Dorsolateral prefrontal cortex (tissue), 120 donors: ENCODE measurements at regions of chr14 and their contacts with region 1.

Region 1: DNA sequence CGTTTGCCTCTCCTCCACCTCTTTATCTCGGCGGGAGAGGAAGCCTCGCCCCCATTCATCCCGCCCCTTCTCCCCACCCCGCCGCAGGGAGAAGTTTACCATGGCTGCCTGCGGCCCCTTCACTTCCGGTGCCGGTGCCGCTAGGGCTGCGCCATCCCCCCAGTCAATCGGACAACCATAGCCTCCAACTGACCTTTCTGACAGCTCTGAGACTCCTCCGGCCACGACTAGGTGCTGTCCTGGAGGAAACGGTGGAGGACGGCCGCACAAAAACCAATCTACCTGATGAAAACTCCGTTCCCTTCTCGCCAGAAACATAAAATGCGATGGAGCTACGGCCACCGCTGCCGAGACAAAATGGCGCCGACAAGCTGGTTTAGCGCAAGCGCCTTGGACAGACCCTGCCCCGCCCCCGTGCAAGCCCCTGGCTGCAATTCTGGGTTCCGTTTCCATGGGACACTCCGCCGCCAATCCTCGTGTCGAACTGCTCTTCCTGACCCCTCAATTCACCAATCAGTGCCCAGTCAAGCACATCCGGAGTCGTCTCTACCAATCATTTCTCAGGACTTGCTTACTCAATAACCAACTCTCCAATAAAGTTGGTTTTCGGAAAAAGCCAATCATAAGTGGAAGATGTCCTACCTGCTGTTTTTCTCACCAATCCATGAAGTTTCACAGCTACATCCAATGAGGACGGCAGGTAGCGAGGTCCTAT is 436 bp upstream of the ARID4A start:
- DNase-seq: peak; percentile 97 to 99 (median 98)
- H3K4me3 ChIP-seq: peak overlapping the region; percentile 63 to 100 (median 95)
- H3K27ac ChIP-seq: peak overlapping the region; percentile 91 to 100 (median 99)
- H3K27me3 ChIP-seq: no peaks in the 10 kb centered on the region
- CTCF ChIP-seq: peak in 47 of 56 donors; percentile 12 to 61 (median 36)

Region 2: DNA sequence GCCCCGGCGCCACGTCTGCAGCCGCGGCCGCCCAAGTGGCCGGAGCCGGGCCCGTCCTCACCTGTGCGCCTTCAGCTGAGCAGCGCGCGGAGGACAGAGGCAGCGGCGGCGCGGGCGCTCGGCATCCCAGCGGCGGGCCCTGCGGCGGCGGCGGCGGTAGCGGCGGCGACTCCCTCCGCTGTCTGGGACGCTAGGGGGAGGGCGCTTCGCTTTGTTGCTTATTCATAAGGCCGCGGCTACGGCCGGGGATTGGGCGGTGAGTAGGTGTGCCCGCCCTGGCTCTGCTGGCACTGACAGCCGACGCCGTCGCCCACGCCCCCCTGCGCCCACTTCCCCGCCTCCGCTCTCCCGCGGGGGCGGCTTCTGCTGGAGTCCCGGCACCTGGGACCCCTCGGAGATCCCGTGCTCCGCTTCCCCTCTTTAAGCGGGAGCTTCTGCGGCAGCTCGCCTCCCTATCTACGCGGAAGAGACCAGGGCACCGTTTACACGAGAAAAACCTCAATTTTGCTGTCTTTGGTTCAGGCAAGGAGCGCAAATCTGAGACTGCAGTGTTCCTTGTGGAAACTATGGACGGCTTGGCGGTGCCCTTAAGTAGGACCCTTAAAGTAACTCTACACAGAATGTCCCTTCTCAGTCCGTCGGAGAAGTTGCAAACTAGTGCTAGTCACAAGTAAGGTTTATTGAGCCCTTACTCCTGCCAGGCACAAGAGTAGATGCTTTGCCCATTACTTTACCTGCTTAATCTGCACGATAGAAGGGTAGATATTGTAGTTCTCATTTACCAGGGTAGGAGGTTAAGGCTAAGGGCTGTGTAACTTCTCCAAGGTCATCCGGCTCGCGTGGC is 145.7 kb before region 1 on chr14 and contains the start of gene ARMH4:
- intact Hi-C with region 1: loop called in 1 of 2 experiments (anchors 5 kb)
- DNase-seq: peak; percentile 61 to 89 (median 86)
- H3K4me3 ChIP-seq: peak within 1 kb of the TSS; percentile 69 to 97 (median 85)
- H3K27ac ChIP-seq: peak within 1 kb of the TSS in 56 of 59 donors; percentile 5 to 89 (median 74)
- H3K27me3 ChIP-seq: no peaks in the 10 kb centered on the region
- CTCF ChIP-seq: peak in 43 of 56 donors; percentile 9 to 63 (median 36)
- total RNA-seq, gene ARMH4: 19.2 to 48.5 (median 33.8) TPM

Region 3: GRCh38 chr14:58239244-58240195 is 58.4 kb before region 1 on chr14:
- intact Hi-C with region 1: loop called (anchors 1 kb)
- DNase-seq: peak; percentile 64 to 85 (median 70)
- H3K4me3 ChIP-seq: peak overlapping the region; percentile 45 to 87 (median 73)
- H3K27ac ChIP-seq: peak overlapping the region; percentile 20 to 89 (median 79)
- H3K27me3 ChIP-seq: no peaks in the 10 kb centered on the region
- CTCF ChIP-seq: peak in 3 of 56 donors; percentile 6 to 19 (median 8)

Region 4: DNA sequence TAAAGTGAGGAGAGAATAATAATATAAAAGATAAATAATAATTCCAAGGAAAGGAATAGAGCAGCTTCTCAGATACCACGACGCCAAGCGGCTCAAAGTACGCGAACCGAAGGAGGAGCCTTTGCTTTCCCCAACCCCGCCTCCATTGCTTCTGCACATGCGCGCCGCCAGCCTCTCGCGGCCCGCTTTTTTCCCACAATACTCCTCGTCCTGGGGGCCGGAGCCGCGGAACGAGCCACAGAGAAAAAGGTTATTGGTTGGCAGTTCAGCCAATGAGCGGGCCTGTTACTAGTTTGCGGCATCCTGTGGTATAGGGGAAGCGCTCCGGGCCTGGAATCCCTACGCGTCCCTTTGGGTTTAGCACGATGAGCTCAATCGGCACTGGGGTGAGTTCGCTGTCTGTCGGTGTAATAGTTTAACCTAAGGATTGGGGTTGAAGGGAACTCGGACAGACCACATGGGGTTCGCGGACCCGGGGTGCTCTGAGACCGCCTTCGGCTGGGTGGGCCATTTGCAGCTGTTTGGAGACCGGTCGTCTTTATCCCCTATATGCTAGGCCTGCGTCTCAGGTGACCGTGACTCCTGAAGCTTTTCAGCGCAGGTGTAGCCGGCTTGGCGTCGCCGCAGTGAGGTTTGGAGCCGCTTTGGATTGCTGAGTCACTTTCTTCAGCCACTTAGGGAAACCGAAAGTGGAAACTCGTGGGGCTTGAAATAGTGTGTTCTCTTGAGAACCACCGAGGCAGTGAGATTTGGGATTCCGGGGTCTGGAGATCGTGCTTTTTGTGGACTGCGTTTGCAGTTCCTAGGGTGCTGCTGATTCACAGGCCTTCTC is 53.1 kb before region 1 on chr14 and contains the start of gene PSMA3:
- intact Hi-C with region 1: loop called (anchors 1 kb)
- DNase-seq: peak; percentile 92 to 98 (median 96)
- H3K4me3 ChIP-seq: peak within 1 kb of the TSS; percentile 63 to 99 (median 90)
- H3K27ac ChIP-seq: peak within 1 kb of the TSS; percentile 74 to 98 (median 93)
- H3K27me3 ChIP-seq: no peaks in the 10 kb centered on the region
- CTCF ChIP-seq: peak in 44 of 56 donors; percentile 5 to 64 (median 35)
- total RNA-seq, gene PSMA3: 45.6 to 146 (median 80.0) TPM

Region 5: DNA sequence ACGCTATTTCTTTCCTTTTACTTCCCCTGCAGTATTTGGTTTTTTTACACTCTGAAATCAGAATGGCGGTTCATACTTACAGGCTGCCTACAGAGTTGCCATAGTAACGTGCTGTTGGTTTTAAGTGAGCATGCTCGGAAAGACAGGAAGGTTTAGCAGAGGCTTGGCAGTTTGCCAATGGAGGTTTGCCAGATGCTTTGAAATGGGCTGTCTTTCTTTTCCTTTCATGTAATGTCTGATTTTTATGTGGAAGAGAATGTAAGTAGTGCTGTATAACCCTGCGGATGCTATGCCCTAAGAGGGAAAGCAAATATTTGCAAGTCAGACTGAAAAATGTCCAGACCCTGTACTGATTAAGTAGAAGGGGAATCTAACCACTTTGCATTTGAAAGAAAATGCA is 33.2 kb after region 1 on chr14:
- intact Hi-C with region 1: loop called (anchors 5 kb)
- DNase-seq: peak in 9 of 10 donors; percentile 56 to 89 (median 78)
- H3K4me3 ChIP-seq: peak overlapping the region; percentile 26 to 75 (median 58)
- H3K27ac ChIP-seq: peak overlapping the region; percentile 40 to 98 (median 86)
- H3K27me3 ChIP-seq: no peaks in the 10 kb centered on the region
- CTCF ChIP-seq: peak in 2 of 56 donors; percentile 14 to 19

Region 6: DNA sequence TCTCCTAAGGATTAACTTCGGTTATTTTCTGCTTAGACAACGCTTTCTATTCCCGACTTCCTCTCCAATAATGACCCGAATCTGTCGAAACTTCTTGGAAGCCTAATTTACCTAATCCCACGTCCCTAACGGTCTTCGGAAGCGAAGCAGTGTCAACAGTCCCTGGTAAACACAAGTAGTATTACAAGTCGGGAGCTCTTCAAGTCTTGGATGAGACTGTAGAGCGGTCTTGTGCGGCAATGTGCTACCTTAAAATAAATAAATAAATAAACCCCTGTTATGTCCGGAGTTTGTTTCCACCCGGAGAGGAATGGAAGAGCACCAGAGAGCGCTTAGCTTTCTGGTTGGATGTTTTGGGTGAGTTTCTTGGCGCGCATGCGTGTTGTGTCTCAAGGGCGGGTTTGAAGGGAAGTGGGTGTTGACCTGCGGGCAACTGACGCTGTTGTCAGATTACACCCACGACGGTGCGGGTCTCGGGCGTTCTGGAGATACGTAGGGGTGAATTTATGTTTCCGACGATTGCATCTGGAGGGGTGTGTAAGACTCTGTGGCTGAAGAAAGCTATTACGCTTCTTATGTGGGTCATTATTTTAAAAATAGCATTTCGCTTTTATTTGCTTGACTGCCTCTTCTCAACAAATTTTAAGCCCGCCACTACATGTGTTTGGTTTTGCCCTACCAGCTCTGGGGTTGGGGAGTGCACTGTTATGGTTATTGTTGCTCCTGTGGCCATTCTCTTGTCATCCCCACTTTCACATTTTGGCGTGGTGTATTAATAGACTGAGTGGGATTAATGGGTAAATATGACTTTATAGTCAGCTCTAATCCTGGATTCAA is 129.6 kb after region 1 on chr14 and contains the starts of genes KIAA0586 and TIMM9:
- intact Hi-C with region 1: loop called (anchors 2 kb)
- DNase-seq: peak; percentile 83 to 94 (median 92)
- H3K4me3 ChIP-seq: peak within 1 kb of the TSS; percentile 62 to 99 (median 88)
- H3K27ac ChIP-seq: peak within 1 kb of the TSS; percentile 66 to 99 (median 96)
- H3K27me3 ChIP-seq: no peaks in the 10 kb centered on the region
- CTCF ChIP-seq: peak in 21 of 56 donors; percentile 4 to 45 (median 15)
- total RNA-seq, gene KIAA0586: 18.8 to 46.5 (median 25.8) TPM
- total RNA-seq, gene TIMM9: 16.1 to 43.0 (median 30.2) TPM

Region 7: DNA sequence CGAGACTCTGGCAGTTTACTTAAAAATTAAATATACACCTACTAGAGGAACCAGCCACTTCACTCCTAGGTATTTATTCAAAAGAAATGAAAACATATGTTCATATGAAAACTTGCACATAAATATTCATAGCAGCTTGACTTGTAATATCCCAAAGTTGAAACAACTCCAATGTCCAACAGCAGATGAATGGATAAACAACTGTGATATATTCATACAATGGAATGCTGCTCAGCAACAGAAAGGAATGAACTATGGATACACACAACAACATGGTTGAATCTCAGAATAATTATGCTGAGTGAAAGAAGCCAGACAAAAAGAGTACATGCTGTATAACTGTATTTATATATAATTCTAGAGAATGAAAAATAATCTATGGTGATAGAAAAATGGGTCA is 286.5 kb after region 1 on chr14:
- intact Hi-C with region 1: no loop called
- DNase-seq: no peak
- H3K4me3 ChIP-seq: no peak overlapping the region
- H3K27ac ChIP-seq: no peak overlapping the region
- H3K27me3 ChIP-seq: no peaks in the 10 kb centered on the region
- CTCF ChIP-seq: no peak